ENCODE measurements at regions of chr10 and their contacts with region 1.

Region 1: GRCh38 chr10:14822879-14823755 is 14.7 kb downstream of the CDNF start:
- DNase-seq: no peak
- ATAC-seq: peak; percentile 70
- H3K4me3 ChIP-seq: no peak overlapping the region
- H3K27ac ChIP-seq: no peak overlapping the region
- H3K4me1 ChIP-seq: no peaks in the 10 kb centered on the region
- H3K27me3 ChIP-seq: no peaks in the 10 kb centered on the region
- CTCF ChIP-seq: peak; percentile 65

Region 2: DNA sequence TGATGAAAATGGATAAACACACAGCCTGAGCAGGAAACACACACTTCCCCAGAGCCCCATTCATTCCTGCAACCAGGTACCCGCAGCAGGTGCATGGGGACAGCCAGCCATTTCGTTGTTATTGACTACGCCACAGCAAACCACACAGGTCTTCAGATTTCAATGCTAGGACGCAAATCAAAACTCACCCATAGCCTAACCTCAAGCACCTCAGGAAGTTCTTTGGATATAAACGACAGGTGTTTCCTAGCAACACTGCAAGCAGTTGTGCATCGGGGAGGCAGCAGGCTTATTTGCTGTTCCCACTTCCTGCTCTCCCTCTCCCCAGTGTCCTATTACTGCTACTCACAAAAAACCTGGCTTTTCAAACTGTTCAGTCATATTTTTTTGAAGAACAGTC is 315.9 kb before region 1 on chr10:
- intact Hi-C with region 1: loop called (anchors 10 kb)
- DNase-seq: no peak
- ATAC-seq: no peak
- H3K4me3 ChIP-seq: no peak overlapping the region
- H3K27ac ChIP-seq: no peak overlapping the region
- H3K4me1 ChIP-seq: no peaks in the 10 kb centered on the region
- H3K27me3 ChIP-seq: no peaks in the 10 kb centered on the region
- CTCF ChIP-seq: no peak